ENCODE measurements at regions of chr1 and their contacts with region 1.

Region 1: DNA sequence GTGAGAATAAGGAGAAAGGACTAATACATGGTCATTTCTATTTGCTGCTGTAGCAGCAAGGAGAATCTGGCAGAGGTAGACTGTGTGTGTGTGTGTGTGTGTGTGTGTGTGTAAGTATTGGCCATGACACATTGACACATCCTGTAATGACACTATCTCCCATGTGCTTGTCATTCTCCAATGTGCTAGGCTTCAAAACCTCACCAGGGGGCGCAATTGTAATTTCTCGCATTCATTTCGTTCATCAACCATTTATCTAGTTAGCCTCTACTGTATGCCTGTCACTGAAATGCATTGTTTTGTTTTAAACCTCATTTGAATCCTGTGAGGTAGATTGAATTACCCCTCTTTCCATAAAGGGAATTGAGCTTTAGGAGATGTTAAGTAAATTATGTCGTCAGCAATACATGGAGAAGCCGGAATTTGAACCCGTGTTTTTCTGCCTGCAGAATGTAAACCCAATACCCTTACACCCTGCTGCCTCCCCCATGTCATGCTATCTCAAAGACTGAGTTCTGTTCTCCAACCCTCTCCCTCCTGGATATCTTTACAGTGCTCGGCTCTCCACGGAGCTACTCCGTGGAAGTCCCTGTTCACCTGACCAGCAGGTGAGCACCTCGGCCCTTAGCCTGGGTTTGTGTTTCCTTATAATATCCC is 100.8 kb downstream of the UCK2 start:
- DNase-seq: peak in 6 of 9 donors; percentile 13 to 40 (median 26)
- ATAC-seq: peak; percentile 77
- H3K4me3 ChIP-seq: no peak overlapping the region
- H3K4me3 Mint-ChIP-seq: no peak overlapping the region
- H3K27ac ChIP-seq: no peak overlapping the region
- H3K27ac Mint-ChIP-seq: no peak overlapping the region
- H3K4me1 ChIP-seq: no peaks in the 10 kb centered on the region
- H3K4me1 Mint-ChIP-seq: peaks cover 0 to 10% (median 0%) of the 10 kb centered on the region in 7 donors
- H3K27me3 ChIP-seq: no peaks in the 10 kb centered on the region
- H3K27me3 Mint-ChIP-seq: peaks cover 14 to 42% (median 32%) of the 10 kb centered on the region in 5 donors

Region 2: DNA sequence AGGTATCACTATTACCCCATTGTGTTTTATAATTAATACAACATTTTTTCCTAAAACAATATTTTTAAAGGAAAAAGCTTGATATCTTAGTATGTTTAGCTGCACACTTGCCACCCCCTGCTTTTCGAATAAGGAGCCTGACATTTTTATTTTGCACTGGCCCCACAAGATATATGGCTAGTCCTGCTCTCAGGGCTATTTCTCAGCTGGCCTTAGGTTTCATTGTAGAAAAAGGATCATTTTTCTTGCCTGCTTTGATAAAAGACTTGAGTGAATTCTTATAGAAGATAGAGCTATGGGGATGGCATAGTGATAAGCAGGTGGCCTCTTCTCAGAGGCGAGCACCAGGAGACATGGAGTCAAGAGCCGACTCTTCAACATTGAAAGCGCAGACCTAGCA is 71.6 kb after region 1 on chr1:
- CTCF ChIA-PET with region 1: no interaction called
- POLR2A ChIA-PET with region 1: no interaction called
- intact Hi-C with region 1: no loop called
- DNase-seq: no peak
- ATAC-seq: no peak
- H3K4me3 ChIP-seq: no peak overlapping the region
- H3K4me3 Mint-ChIP-seq: no peak overlapping the region
- H3K27ac ChIP-seq: no peak overlapping the region
- H3K27ac Mint-ChIP-seq: no peak overlapping the region
- H3K4me1 ChIP-seq: no peaks in the 10 kb centered on the region
- H3K4me1 Mint-ChIP-seq: no peaks in the 10 kb centered on the region
- H3K27me3 ChIP-seq: no peaks in the 10 kb centered on the region
- H3K27me3 Mint-ChIP-seq: peaks cover 0 to 9% (median 7%) of the 10 kb centered on the region in 5 donors

Region 3: DNA sequence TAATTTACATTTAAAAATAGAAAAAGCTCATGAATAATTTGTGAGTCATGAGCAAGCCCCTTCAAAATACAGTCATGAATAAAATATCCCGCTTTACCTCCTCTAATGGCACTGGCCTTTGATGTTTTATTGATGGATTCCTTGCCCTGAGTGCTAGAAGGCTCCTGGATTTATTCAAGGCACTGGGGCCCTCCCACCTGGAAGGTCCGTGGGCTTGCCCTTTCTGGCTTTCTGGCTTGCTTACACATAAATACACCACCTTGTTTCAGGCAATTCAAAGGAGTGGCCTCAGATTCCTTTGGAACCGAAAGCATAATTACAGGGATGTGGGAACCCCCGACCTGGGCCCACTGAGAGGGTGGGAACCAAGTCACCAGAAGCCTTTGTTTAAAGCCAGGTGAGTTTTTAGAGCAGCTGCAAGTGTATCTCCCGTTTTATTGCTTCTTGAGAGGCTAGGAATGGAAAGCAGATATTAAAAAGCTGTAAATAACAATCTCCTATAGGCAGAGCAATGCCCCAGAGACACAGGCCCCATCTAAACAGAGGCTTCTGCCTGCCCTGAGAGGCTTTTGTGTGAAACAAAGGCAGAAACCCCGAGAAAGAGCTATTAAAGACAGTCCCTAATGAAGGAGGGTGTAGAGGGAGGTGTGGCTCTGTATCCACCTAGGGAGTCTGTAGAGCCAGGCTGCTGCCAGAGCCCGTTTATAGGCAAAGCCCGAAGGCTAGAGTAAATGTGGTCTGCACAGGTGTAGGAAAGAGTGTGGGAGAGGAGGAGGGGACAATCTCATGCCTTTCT is 112.2 kb after region 1 on chr1:
- CTCF ChIA-PET with region 1: no interaction called
- POLR2A ChIA-PET with region 1: no interaction called
- intact Hi-C with region 1: no loop called
- DNase-seq: no peak
- ATAC-seq: no peak
- H3K4me3 ChIP-seq: no peak overlapping the region
- H3K4me3 Mint-ChIP-seq: no peak overlapping the region
- H3K27ac ChIP-seq: no peak overlapping the region
- H3K27ac Mint-ChIP-seq: no peak overlapping the region
- H3K4me1 ChIP-seq: no peaks in the 10 kb centered on the region
- H3K4me1 Mint-ChIP-seq: peaks cover 0 to 2% (median 0%) of the 10 kb centered on the region in 7 donors
- H3K27me3 ChIP-seq: no peaks in the 10 kb centered on the region
- H3K27me3 Mint-ChIP-seq: peaks cover 2 to 37% (median 18%) of the 10 kb centered on the region in 5 donors

Region 4: GRCh38 chr1:166166695-166167571 is 238.7 kb after region 1 on chr1 and contains the start of gene FAM78B:
- CTCF ChIA-PET with region 1: no interaction called
- POLR2A ChIA-PET with region 1: no interaction called
- intact Hi-C with region 1: loop called in 1 of 2 experiments (anchors 5 kb)
- DNase-seq: peak in 7 of 9 donors; percentile 5 to 59 (median 25)
- ATAC-seq: peak; percentile 67
- H3K4me3 ChIP-seq: no peak within 1 kb of the TSS
- H3K4me3 Mint-ChIP-seq: peak within 1 kb of the TSS; percentile 62 to 85 (median 78)
- H3K27ac ChIP-seq: no peak within 1 kb of the TSS
- H3K27ac Mint-ChIP-seq: no peak within 1 kb of the TSS
- H3K4me1 ChIP-seq: peaks cover 0 to 7% of the 10 kb centered on the region in 2 donors
- H3K4me1 Mint-ChIP-seq: peaks cover 4 to 25% (median 21%) of the 10 kb centered on the region in 7 donors
- H3K27me3 ChIP-seq: peaks cover 0 to 4% of the 10 kb centered on the region in 2 donors
- H3K27me3 Mint-ChIP-seq: peaks cover 32 to 61% (median 48%) of the 10 kb centered on the region in 5 donors
- total RNA-seq, gene FAM78B: 0.45 to 0.58 TPM in 2 of 5 experiments, not detected in the others

Region 5: GRCh38 chr1:166432655-166433054 is 504.5 kb after region 1 on chr1:
- CTCF ChIA-PET with region 1: no interaction called
- POLR2A ChIA-PET with region 1: no interaction called
- intact Hi-C with region 1: loop called in 1 of 2 experiments (anchors 2 kb)
- DNase-seq: no peak
- ATAC-seq: no peak
- H3K4me3 ChIP-seq: no peak overlapping the region
- H3K4me3 Mint-ChIP-seq: no peak overlapping the region
- H3K27ac ChIP-seq: no peak overlapping the region
- H3K27ac Mint-ChIP-seq: no peak overlapping the region
- H3K4me1 ChIP-seq: no peaks in the 10 kb centered on the region
- H3K4me1 Mint-ChIP-seq: no peaks in the 10 kb centered on the region
- H3K27me3 ChIP-seq: no peaks in the 10 kb centered on the region
- H3K27me3 Mint-ChIP-seq: peaks cover 0 to 15% (median 7%) of the 10 kb centered on the region in 5 donors

Region 6: GRCh38 chr1:166479052-166479631 is 550.9 kb after region 1 on chr1:
- CTCF ChIA-PET with region 1: interaction called, 5 read pairs
- POLR2A ChIA-PET with region 1: no interaction called
- intact Hi-C with region 1: loop called (anchors 1 kb)
- DNase-seq: peak in 7 of 9 donors; percentile 17 to 41 (median 29)
- ATAC-seq: peak; percentile 62
- H3K4me3 ChIP-seq: no peak overlapping the region
- H3K4me3 Mint-ChIP-seq: no peak overlapping the region
- H3K27ac ChIP-seq: no peak overlapping the region
- H3K27ac Mint-ChIP-seq: no peak overlapping the region
- H3K4me1 ChIP-seq: no peaks in the 10 kb centered on the region
- H3K4me1 Mint-ChIP-seq: peaks cover 0 to 3% (median 0%) of the 10 kb centered on the region in 7 donors
- H3K27me3 ChIP-seq: no peaks in the 10 kb centered on the region
- H3K27me3 Mint-ChIP-seq: peaks cover 0 to 6% (median 0%) of the 10 kb centered on the region in 5 donors

Region 7: GRCh38 chr1:167059045-167059808 is 1131.0 kb after region 1 on chr1:
- CTCF ChIA-PET with region 1: no interaction called
- POLR2A ChIA-PET with region 1: no interaction called
- intact Hi-C with region 1: loop called (anchors 5 to 10 kb)
- DNase-seq: peak; percentile 38 to 75 (median 57)
- ATAC-seq: peak; percentile 78
- H3K4me3 ChIP-seq: no peak overlapping the region
- H3K4me3 Mint-ChIP-seq: no peak overlapping the region
- H3K27ac ChIP-seq: no peak overlapping the region
- H3K27ac Mint-ChIP-seq: peak overlapping the region in 6 of 9 donors; percentile 5 to 55 (median 25)
- H3K4me1 ChIP-seq: peaks cover 0 to 4% of the 10 kb centered on the region in 2 donors
- H3K4me1 Mint-ChIP-seq: peaks cover 0 to 8% (median 6%) of the 10 kb centered on the region in 7 donors
- H3K27me3 ChIP-seq: no peaks in the 10 kb centered on the region
- H3K27me3 Mint-ChIP-seq: no peaks in the 10 kb centered on the region

Region 8: GRCh38 chr1:167499664-167500101 is 1571.5 kb after region 1 on chr1:
- CTCF ChIA-PET with region 1: no interaction called
- POLR2A ChIA-PET with region 1: no interaction called
- intact Hi-C with region 1: no loop called
- DNase-seq: peak in 6 of 9 donors; percentile 51 to 74 (median 55)
- ATAC-seq: peak; percentile 76
- H3K4me3 ChIP-seq: peak overlapping the region; percentile 8
- H3K4me3 Mint-ChIP-seq: peak overlapping the region; percentile 49 to 88 (median 68)
- H3K27ac ChIP-seq: peak overlapping the region; percentile 96
- H3K27ac Mint-ChIP-seq: peak overlapping the region; percentile 77 to 100 (median 94)
- H3K4me1 ChIP-seq: peaks cover 55 to 99% of the 10 kb centered on the region in 2 donors
- H3K4me1 Mint-ChIP-seq: peaks cover 76 to 100% (median 98%) of the 10 kb centered on the region in 7 donors
- H3K27me3 ChIP-seq: no peaks in the 10 kb centered on the region
- H3K27me3 Mint-ChIP-seq: no peaks in the 10 kb centered on the region

Measured in naive thymus-derived CD4-positive, alpha-beta T cell (primary cell).